PC-9 (cell line): ENCODE measurements at regions of chr6 and their contacts with region 1.

Region 1: DNA sequence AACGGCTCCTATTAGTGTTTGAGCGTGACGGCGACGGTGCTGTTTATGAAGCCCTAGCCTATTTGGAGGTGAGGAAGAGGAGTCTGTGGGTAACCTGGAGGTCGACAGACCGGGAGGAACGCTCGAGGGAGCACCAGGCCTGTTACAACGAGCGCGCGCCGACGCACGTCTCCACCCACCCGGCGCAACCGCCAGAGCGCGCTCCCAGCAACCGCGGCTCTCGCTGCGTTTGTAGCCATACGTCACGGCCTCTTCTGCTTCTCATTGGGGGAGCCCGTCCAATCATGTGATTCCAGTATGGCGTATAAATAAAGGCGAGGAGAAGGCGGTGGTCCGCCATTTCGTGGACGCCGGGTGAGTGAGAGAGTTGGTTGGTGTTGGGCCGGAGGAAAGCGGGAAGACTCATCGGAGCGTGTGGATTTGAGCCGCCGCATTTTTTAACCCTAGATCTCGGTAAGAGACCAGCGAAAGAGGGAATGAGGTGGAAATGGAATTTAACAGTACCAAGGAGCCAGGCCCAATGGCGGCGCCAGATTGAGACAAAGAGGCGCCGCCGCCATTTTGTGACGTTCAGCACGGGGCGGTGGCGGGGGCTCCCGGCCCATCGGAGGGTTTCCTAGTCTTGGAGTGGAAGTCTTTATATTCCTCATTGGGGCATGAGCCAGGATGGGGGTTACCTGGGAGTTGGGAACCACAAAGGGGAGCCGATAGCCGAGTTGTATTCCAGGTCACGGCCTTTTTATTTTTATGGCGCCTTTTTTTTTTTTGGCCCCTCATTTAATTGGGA is at the start of gene SRSF3:
- DNase-seq: peak; percentile 91 to 95
- H3K4me3 ChIP-seq: peak within 1 kb of the TSS; percentile 100
- H3K27ac ChIP-seq: peak within 1 kb of the TSS; percentile 93
- H3K4me1 ChIP-seq: peaks cover 55% of the 10 kb centered on the region
- H3K27me3 ChIP-seq: no peaks in the 10 kb centered on the region
- CTCF ChIP-seq: peak; percentile 42; the same call in 1 of the 2 replicates
- total RNA-seq, gene SRSF3: 278 and 282 TPM in 2 replicates

Region 2: GRCh38 chr6:36423101-36423824 is 171.0 kb before region 1 on chr6:
- CTCF ChIA-PET with region 1: interaction called, 3 read pairs
- POLR2A ChIA-PET with region 1: interaction called, 4 read pairs
- intact Hi-C with region 1: loop called (anchors 1 kb)
- DNase-seq: peak; percentile 94 to 98
- H3K4me3 ChIP-seq: peak overlapping the region; percentile 75
- H3K27ac ChIP-seq: peak overlapping the region; percentile 81
- H3K4me1 ChIP-seq: peaks cover 45% of the 10 kb centered on the region
- H3K27me3 ChIP-seq: no peaks in the 10 kb centered on the region
- CTCF ChIP-seq: peak; percentile 65

Region 3: DNA sequence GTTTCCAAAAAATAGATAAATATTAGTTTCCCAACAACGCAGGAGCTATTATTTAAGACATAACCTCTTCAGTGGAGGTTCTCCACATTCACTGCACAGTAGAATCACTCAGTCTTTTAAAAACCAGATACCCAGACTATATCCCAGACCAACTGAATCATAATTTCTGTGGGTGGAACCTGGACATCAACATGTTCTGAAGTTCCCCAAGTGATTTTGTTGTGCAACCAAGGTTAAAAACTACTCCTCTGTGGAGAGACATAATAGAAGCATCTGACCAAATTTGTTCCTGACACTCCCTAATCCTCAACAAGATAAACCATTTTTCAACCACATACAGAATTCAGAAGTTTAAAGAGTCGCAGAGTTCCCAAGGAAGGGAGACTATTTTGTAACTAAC is 89.2 kb before region 1 on chr6:
- CTCF ChIA-PET with region 1: no interaction called
- POLR2A ChIA-PET with region 1: interaction called, 11 read pairs
- intact Hi-C with region 1: no loop called
- DNase-seq: no peak
- H3K4me3 ChIP-seq: no peak overlapping the region
- H3K27ac ChIP-seq: no peak overlapping the region
- H3K4me1 ChIP-seq: peaks cover 13% of the 10 kb centered on the region
- H3K27me3 ChIP-seq: no peaks in the 10 kb centered on the region
- CTCF ChIP-seq: no peak

Region 4: GRCh38 chr6:36546920-36547645 is 47.1 kb before region 1 on chr6 and contains the start of gene STK38:
- CTCF ChIA-PET with region 1: no interaction called
- POLR2A ChIA-PET with region 1: interaction called, 4 read pairs
- intact Hi-C with region 1: loop called (anchors 1 kb)
- DNase-seq: peak; percentile 73 to 84
- H3K4me3 ChIP-seq: peak within 1 kb of the TSS; percentile 92
- H3K27ac ChIP-seq: peak within 1 kb of the TSS; percentile 51
- H3K4me1 ChIP-seq: peaks cover 36% of the 10 kb centered on the region
- H3K27me3 ChIP-seq: no peaks in the 10 kb centered on the region
- CTCF ChIP-seq: peak; percentile 32; the same call in 1 of the 2 replicates
- total RNA-seq, gene STK38: 45.7 and 53.3 TPM in 2 replicates

Region 5: DNA sequence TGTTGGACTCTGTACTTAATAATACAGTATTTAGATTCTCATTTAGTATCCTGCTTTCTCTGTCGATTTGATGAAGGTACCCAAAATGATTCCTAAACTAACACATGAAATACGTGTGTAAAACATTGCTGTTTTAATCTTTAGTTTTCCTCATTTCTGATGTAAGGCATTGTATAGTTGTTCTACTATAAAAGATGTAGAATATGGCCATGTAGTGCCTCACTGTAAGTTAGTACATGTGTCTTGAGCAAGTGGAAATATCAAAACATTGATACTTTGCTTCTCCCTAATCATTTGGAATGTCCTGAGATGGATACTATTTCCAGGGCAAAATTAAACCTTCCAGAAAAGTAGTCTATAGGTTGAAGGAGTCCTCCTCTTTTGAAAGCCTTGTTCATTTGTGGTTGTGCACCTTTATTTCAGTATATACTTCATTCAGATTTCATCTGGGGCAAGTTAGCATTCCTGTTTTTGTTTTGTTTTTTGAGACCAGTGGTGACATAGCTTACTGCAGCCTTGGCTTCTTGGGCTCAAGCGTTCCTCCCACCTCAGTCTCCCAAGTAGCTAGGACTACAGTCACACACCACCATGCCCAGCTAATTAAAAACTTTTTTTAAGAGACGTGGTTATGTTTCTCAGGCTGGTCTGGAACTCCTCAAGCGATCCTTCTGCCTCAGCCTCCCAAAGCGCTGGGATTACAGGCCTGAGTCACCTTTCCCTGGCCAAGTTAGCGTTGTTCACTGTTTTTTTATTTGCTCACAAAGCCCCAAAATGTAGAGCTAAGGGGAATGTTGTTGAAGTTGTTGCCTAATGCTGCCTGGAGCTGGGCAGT is 11.6 kb after region 1 on chr6:
- CTCF ChIA-PET with region 1: no interaction called
- POLR2A ChIA-PET with region 1: interaction called, 33 read pairs
- intact Hi-C with region 1: no loop called
- DNase-seq: no peak
- H3K4me3 ChIP-seq: no peak overlapping the region
- H3K27ac ChIP-seq: no peak overlapping the region; the same call in 1 of the 2 replicates
- H3K4me1 ChIP-seq: 0 out of 2 replicates have a peak, but pooled peaks cover 13% of the 10 kb centered on the region
- H3K27me3 ChIP-seq: no peaks in the 10 kb centered on the region
- CTCF ChIP-seq: no peak

Region 6: DNA sequence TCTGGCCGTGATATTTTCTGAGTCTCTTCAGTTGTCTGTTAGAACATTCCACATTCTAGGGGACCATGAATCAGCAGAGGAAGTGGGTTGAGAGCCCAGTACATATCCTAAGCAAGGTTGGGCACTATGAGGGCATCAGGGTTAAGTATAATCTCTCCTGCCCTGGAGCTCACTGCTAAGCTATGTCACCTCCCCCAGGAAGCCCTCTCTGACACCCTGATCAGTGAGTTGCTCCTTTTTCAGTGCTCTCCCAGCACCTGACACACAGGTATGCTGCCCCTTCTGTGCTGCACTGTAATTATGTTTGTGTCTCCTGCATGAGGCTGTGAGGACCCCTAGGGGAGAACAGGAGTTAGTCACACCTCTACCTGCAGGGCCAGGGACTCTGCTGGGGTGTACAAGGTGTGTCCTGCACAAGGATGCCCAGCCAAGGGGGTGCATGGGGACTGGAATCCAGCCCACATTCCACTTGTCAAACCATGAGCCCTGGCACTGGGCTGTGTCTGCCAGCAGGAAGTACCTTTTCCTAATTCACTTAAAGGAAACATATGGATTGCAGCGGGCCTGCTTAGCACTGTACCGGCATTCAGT is 107.3 kb after region 1 on chr6:
- CTCF ChIA-PET with region 1: no interaction called
- POLR2A ChIA-PET with region 1: no interaction called
- intact Hi-C with region 1: no loop called
- DNase-seq: peak; percentile 60 to 69
- H3K4me3 ChIP-seq: no peak overlapping the region
- H3K27ac ChIP-seq: no peak overlapping the region
- H3K4me1 ChIP-seq: peaks cover 12% of the 10 kb centered on the region
- H3K27me3 ChIP-seq: no peaks in the 10 kb centered on the region
- CTCF ChIP-seq: peak; percentile 60

Region 7: GRCh38 chr6:36851149-36851614 is 257.0 kb after region 1 on chr6:
- CTCF ChIA-PET with region 1: no interaction called
- POLR2A ChIA-PET with region 1: interaction called, 25 read pairs
- intact Hi-C with region 1: no loop called
- DNase-seq: peak; percentile 34 to 47
- H3K4me3 ChIP-seq: no peak overlapping the region
- H3K27ac ChIP-seq: no peak overlapping the region
- H3K4me1 ChIP-seq: peaks cover 22% of the 10 kb centered on the region
- H3K27me3 ChIP-seq: no peaks in the 10 kb centered on the region
- CTCF ChIP-seq: peak; percentile 93